ENCODE measurements at regions of chr10 and their contacts with region 1.

Region 1: GRCh38 chr10:21145751-21146435 is 248.8 kb upstream of the NEBL start:
- DNase-seq: no peak

Region 2: DNA sequence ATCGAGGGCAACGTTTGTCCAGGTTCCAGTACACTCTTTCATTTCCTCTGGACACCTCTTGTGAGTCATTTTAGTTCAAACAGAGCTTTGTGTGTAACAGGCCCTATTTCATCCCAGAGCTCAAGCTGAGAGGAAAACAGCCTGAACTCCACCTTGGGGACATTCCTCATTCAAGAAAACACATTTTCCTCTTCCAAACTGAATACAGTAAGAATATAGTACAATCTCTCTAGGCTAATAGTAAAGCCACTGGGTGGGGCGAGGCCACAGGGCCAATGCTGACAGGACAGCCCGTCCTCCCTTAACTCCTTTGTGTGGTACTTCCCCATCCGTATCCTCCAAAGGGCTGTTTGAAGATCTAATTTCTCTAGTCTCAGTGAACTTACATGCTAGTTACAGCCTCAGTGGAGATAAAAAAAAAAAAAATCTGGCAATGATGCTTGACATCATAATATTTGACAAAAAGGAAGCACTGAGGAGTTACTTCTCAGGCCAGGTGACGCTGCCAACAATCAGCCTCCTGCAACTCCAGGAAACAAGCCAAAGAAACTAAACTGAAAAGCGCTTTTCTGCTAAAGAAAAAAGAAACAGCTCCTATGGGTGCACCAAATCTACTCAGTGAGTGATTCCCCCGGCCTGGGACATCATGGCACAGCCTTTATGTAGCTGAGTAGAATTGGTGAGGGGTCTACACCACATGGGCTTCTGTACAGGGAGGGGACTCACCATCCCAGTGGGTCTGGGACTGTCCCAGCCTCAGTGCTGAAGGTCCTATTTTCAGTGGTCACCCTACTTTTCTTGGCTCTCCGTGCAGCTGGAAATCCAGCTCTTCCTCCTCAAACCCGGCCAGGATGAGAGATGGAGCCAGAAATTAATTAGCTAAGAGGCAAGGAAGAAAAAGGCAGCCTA is 10.6 kb before region 1 on chr10:
- intact Hi-C with region 1: loop called in 1 of 2 experiments (anchors 1 kb)
- DNase-seq: no peak